ENCODE measurements at regions of chr3 and their contacts with region 1.

Region 1: DNA sequence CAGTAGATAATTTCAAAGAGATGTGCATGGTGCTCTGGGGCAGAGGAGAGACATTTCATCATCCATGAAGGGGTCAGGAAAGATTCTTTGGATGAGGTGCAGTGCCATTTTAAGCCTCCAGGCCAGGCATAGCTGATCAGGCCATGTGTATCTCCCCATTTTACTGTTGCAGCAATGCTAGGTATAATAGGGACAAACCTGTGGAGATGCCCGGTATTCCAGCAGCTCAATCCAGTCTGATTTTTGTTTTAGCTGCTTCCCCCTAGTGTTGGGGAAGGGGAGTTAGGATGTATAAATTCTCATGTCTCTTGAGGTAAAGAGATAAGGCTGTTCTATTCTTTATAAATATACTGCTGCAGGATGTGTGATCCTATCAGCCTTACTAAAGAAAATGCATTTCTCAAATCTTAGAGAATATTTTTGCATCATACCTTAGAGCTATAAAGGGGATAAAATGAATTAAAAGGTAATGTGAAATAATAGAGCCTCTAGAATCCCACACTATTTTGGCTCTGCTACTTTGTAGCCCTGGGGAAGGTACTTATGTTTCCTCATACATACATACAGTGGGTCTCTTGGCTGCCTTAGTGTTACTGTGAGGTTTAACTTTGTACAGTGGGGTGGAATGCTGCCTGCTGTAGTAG is 5.2 kb downstream of the CDV3 start:
- DNase-seq: no peak
- ATAC-seq: peak; percentile 48; the same call in 1 of the 2 replicates
- H3K4me3 ChIP-seq: peak overlapping the region; percentile 12 to 13
- H3K27ac ChIP-seq: peak overlapping the region; percentile 65
- H3K4me1 ChIP-seq: peaks cover 37% of the 10 kb centered on the region
- H3K27me3 ChIP-seq: no peaks in the 10 kb centered on the region
- CTCF ChIP-seq: peak; percentile 77

Region 2: GRCh38 chr3:133448478-133449122 is 130.1 kb before region 1 on chr3:
- CTCF ChIA-PET with region 1: interaction called, 5 read pairs
- POLR2A ChIA-PET with region 1: interaction called, 7 read pairs
- in situ Hi-C with region 1: no loop called
- intact Hi-C with region 1: loop called (anchors 1 kb)
- DNase-seq: no peak
- ATAC-seq: no peak
- H3K4me3 ChIP-seq: no peak overlapping the region
- H3K27ac ChIP-seq: peak overlapping the region; percentile 90
- H3K4me1 ChIP-seq: peaks cover 73% of the 10 kb centered on the region
- H3K27me3 ChIP-seq: no peaks in the 10 kb centered on the region
- CTCF ChIP-seq: no peak

Region 3: GRCh38 chr3:133531981-133532380 is 46.7 kb before region 1 on chr3:
- CTCF ChIA-PET with region 1: interaction called, 3 read pairs
- POLR2A ChIA-PET with region 1: interaction called, 11 read pairs
- in situ Hi-C with region 1: no loop called
- intact Hi-C with region 1: no loop called
- DNase-seq: no peak
- ATAC-seq: no peak
- H3K4me3 ChIP-seq: no peak overlapping the region
- H3K27ac ChIP-seq: peak overlapping the region; percentile 60; the same call in 1 of the 2 replicates
- H3K4me1 ChIP-seq: peaks cover 26% of the 10 kb centered on the region
- H3K27me3 ChIP-seq: no peaks in the 10 kb centered on the region
- CTCF ChIP-seq: no peak

Region 4: GRCh38 chr3:133591271-133591742 is 12.6 kb after region 1 on chr3:
- CTCF ChIA-PET with region 1: no interaction called
- POLR2A ChIA-PET with region 1: interaction called, 23 read pairs
- in situ Hi-C with region 1: no loop called
- intact Hi-C with region 1: no loop called
- DNase-seq: no peak
- ATAC-seq: peak; percentile 48
- H3K4me3 ChIP-seq: no peak overlapping the region
- H3K27ac ChIP-seq: peak overlapping the region; percentile 36
- H3K4me1 ChIP-seq: peaks cover 49% of the 10 kb centered on the region
- H3K27me3 ChIP-seq: no peaks in the 10 kb centered on the region
- CTCF ChIP-seq: no peak

Region 5: GRCh38 chr3:133620066-133620784 is 41.6 kb after region 1 on chr3:
- CTCF ChIA-PET with region 1: no interaction called
- POLR2A ChIA-PET with region 1: interaction called, 11 read pairs
- in situ Hi-C with region 1: no loop called
- intact Hi-C with region 1: no loop called
- DNase-seq: no peak
- ATAC-seq: no peak
- H3K4me3 ChIP-seq: no peak overlapping the region
- H3K27ac ChIP-seq: no peak overlapping the region
- H3K4me1 ChIP-seq: no peaks in the 10 kb centered on the region
- H3K27me3 ChIP-seq: no peaks in the 10 kb centered on the region
- CTCF ChIP-seq: no peak